ENCODE measurements at regions of chr22 and their contacts with region 1.

Region 1: DNA sequence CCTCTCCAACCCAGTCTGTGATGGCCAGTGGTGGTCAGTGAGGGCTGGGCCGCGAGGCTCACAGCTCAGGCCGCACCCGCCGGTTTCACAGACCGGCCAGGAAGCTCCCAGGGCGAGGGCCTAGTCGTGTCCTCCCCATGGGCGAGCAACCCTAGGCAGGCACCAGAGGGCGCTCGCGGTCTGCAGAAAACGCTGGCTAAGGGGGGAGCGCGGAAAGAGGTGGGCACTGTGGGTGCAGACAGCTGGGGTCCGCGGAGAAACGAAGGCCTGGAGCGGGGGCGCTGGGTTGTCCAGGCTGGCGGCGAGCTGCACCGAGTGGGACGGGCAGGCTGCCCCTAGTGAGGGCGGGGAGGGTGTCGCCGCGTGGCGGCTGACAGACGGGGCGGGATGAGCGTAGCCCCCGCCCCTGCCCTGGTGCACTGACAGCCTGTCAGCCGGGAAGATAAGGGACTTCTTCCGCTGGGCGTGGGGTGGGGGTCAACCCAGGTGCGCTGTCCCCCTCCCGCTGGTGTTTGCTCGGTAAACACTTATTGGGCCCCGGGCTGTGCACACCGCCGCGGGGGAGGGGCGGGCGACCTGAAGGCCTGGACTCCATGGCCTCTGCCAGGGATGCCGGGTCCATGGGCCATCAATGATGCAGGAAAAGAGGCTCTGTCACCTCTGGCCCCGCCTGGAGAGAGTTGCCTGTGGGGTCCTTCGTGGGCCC is 7.5 kb downstream of the GP1BB start:
- DNase-seq: peak; percentile 92
- ATAC-seq: peak; percentile 93
- H3K4me3 Mint-ChIP-seq: peak overlapping the region; percentile 56
- H3K27ac Mint-ChIP-seq: no peak overlapping the region
- H3K4me1 Mint-ChIP-seq: no peaks in the 10 kb centered on the region
- H3K27me3 Mint-ChIP-seq: no peaks in the 10 kb centered on the region

Region 2: GRCh38 chr22:19631899-19632667 is 98.7 kb before region 1 on chr22:
- CTCF ChIA-PET with region 1: no interaction called
- POLR2A ChIA-PET with region 1: no interaction called
- intact Hi-C with region 1: no loop called
- DNase-seq: peak; percentile 36
- ATAC-seq: peak; percentile 39
- H3K4me3 Mint-ChIP-seq: no peak overlapping the region
- H3K27ac Mint-ChIP-seq: no peak overlapping the region
- H3K4me1 Mint-ChIP-seq: peaks cover 2% of the 10 kb centered on the region
- H3K27me3 Mint-ChIP-seq: no peaks in the 10 kb centered on the region

Region 3: GRCh38 chr22:19766511-19767426 is 36.0 kb after region 1 on chr22:
- CTCF ChIA-PET with region 1: interaction called, 8 read pairs
- POLR2A ChIA-PET with region 1: no interaction called
- intact Hi-C with region 1: loop called (anchors 2 to 5 kb)
- DNase-seq: peak; percentile 78
- ATAC-seq: peak; percentile 88
- H3K4me3 Mint-ChIP-seq: no peak overlapping the region
- H3K27ac Mint-ChIP-seq: no peak overlapping the region
- H3K4me1 Mint-ChIP-seq: peaks cover 7% of the 10 kb centered on the region
- H3K27me3 Mint-ChIP-seq: peaks cover 52% of the 10 kb centered on the region

Region 4: GRCh38 chr22:19779685-19780268 is 49.0 kb after region 1 on chr22:
- CTCF ChIA-PET with region 1: interaction called, 4 read pairs
- POLR2A ChIA-PET with region 1: no interaction called
- intact Hi-C with region 1: loop called in 1 of 2 experiments (anchors 5 kb)
- DNase-seq: no peak
- ATAC-seq: no peak
- H3K4me3 Mint-ChIP-seq: no peak overlapping the region
- H3K27ac Mint-ChIP-seq: no peak overlapping the region
- H3K4me1 Mint-ChIP-seq: peaks cover 8% of the 10 kb centered on the region
- H3K27me3 Mint-ChIP-seq: peaks cover 9% of the 10 kb centered on the region

Region 5: GRCh38 chr22:19891317-19892256 is 160.8 kb after region 1 on chr22:
- CTCF ChIA-PET with region 1: interaction called, 11 read pairs
- POLR2A ChIA-PET with region 1: no interaction called
- intact Hi-C with region 1: loop called in 1 of 2 experiments (anchors 1 kb)
- DNase-seq: peak; percentile 92
- ATAC-seq: peak; percentile 75
- H3K4me3 Mint-ChIP-seq: peak overlapping the region; percentile 72
- H3K27ac Mint-ChIP-seq: peak overlapping the region; percentile 95
- H3K4me1 Mint-ChIP-seq: peaks cover 86% of the 10 kb centered on the region
- H3K27me3 Mint-ChIP-seq: no peaks in the 10 kb centered on the region

Region 6: DNA sequence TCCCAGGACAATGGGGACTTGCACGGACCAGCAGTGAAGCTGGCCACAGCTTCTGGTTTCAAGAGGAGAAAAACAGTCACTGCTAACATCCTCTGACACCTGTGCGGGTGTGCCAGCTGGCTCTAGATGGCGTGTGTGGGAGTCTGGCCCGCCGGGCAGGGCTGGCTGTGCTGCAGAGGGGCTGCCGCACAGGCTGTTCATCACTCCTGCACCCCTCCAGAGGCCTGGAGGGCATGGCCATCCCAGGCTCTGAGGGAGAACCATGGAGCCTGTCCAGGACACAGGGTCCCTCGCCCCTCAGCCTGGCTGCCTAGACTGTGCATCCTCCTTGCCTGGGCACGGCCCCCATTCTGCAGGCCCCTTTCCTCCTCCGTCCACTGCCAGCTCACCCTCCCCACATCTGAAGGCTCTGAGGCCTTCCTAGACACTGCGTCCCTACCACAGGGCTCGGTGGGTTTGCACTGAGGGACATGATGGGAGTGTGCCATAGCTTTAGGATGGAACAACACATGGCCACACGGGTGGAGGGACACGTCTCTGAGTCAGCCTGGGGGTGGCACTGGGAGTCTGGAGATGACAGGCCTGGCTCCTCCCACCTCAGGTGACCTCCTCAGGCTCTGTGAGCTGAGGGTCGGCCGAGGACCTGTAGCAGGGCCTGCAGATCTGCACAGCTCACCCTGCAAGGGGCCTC is 166.0 kb after region 1 on chr22:
- CTCF ChIA-PET with region 1: interaction called, 11 read pairs
- POLR2A ChIA-PET with region 1: no interaction called
- intact Hi-C with region 1: loop called in 1 of 2 experiments (anchors 1 kb)
- DNase-seq: peak; percentile 66
- ATAC-seq: peak; percentile 21
- H3K4me3 Mint-ChIP-seq: no peak overlapping the region
- H3K27ac Mint-ChIP-seq: no peak overlapping the region
- H3K4me1 Mint-ChIP-seq: peaks cover 55% of the 10 kb centered on the region
- H3K27me3 Mint-ChIP-seq: no peaks in the 10 kb centered on the region

Region 7: DNA sequence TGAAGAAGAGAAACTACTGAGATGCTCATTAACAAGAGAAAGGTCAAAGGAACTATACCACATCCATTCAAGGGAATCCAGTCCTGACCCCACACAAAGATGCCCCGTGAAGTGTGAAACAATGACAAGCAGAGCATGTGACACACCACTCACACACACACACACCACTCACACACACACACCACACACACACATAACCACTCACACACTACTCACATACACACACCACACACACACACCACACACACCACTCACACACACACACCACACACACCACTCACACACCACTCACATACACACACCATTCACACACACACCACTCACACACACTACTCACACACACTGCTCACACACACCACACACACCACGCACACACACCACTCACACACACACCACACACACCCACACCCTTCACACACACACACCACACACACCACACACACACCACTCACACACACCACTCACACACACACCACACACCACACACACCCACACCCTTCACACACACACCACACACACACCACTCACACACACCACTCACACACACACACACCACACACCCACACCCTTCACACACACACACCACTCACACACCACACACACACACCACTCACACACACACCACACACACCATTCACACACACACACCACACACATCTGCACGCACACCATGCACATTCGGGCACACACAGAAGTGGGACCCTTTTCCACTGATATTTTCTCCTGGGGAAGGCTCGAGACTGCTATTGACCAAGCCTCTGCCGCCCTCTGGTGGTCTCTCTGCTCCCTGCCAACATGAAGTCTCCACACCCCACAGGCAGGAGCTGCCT is 178.8 kb after region 1 on chr22:
- CTCF ChIA-PET with region 1: interaction called, 83 read pairs
- POLR2A ChIA-PET with region 1: interaction called, 7 read pairs
- intact Hi-C with region 1: loop called (anchors 1 kb)
- DNase-seq: peak; percentile 92
- ATAC-seq: peak; percentile 92
- H3K4me3 Mint-ChIP-seq: no peak overlapping the region
- H3K27ac Mint-ChIP-seq: peak overlapping the region; percentile 45
- H3K4me1 Mint-ChIP-seq: peaks cover 8% of the 10 kb centered on the region
- H3K27me3 Mint-ChIP-seq: no peaks in the 10 kb centered on the region

Region 8: GRCh38 chr22:19948057-19948760 is 217.4 kb after region 1 on chr22:
- CTCF ChIA-PET with region 1: interaction called, 21 read pairs
- POLR2A ChIA-PET with region 1: no interaction called
- intact Hi-C with region 1: loop called in 1 of 2 experiments (anchors 1 kb)
- DNase-seq: no peak
- ATAC-seq: no peak
- H3K4me3 Mint-ChIP-seq: no peak overlapping the region
- H3K27ac Mint-ChIP-seq: no peak overlapping the region
- H3K4me1 Mint-ChIP-seq: peaks cover 23% of the 10 kb centered on the region
- H3K27me3 Mint-ChIP-seq: no peaks in the 10 kb centered on the region